Dorsolateral prefrontal cortex (tissue), 120 donors: ENCODE measurements at regions of chr1 and their contacts with region 1.

Region 1: GRCh38 chr1:206663832-206664652 is 20.7 kb upstream of the MAPKAPK2 start:
- DNase-seq: peak in 6 of 10 donors; percentile 39 to 58 (median 52)
- H3K4me3 ChIP-seq: peak overlapping the region in 51 of 59 donors; percentile 3 to 56 (median 34)
- H3K27ac ChIP-seq: peak overlapping the region in 3 of 59 donors; percentile 17 to 50 (median 38)
- H3K27me3 ChIP-seq: peaks cover 0 to 12% (median 0%) of the 10 kb centered on the region in 45 donors
- CTCF ChIP-seq: peak; percentile 74 to 96 (median 86)

Region 2: GRCh38 chr1:206544562-206545257 is 119.3 kb before region 1 on chr1:
- intact Hi-C with region 1: no loop called
- DNase-seq: peak in 9 of 10 donors; percentile 46 to 77 (median 65)
- H3K4me3 ChIP-seq: no peak overlapping the region
- H3K27ac ChIP-seq: no peak overlapping the region
- H3K27me3 ChIP-seq: no peaks in the 10 kb centered on the region
- CTCF ChIP-seq: peak; percentile 46 to 92 (median 82)

Region 3: GRCh38 chr1:206612129-206612876 is 51.7 kb before region 1 on chr1 and contains the start of gene EIF2D:
- intact Hi-C with region 1: loop called in 1 of 2 experiments (anchors 10 kb)
- DNase-seq: peak; percentile 88 to 96 (median 91)
- H3K4me3 ChIP-seq: peak within 1 kb of the TSS; percentile 61 to 99 (median 84)
- H3K27ac ChIP-seq: peak within 1 kb of the TSS; percentile 54 to 93 (median 85)
- H3K27me3 ChIP-seq: no peaks in the 10 kb centered on the region
- CTCF ChIP-seq: peak; percentile 74 to 99 (median 95)
- total RNA-seq, gene EIF2D: 19.2 to 56.2 (median 35.0) TPM